Aorta (tissue), 5 donors: ENCODE measurements at regions of chrX and their contacts with region 1.

Region 1: DNA sequence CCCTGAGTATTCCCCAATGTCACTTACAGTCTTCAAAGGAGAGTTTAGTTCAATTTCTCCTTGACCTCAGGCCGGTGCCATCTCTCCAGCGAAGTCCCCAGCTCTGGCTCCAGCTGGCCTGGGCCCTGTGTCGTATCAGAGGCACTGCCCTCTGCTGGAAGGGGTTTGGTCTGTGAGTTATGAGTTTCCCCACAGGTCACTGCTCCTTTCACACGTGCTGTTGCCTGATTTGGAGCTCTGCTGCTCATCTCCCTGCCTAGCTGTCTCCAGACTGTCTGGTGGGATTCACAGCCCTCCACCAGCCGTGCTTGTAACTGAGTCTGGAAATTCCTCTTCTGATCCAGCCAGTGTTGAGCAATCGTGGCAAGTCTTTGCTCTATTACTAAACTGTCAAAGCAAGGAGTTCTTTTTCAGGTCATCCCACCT is at the start of gene RAP2C:
- DNase-seq: peak; percentile 81 to 87
- ATAC-seq: peak; percentile 85
- H3K4me3 ChIP-seq: peak within 1 kb of the TSS; percentile 56 to 85
- H3K27ac ChIP-seq: peak within 1 kb of the TSS; percentile 3 to 76
- H3K4me1 ChIP-seq: no peaks in the 10 kb centered on the region
- H3K27me3 ChIP-seq: no peaks in the 10 kb centered on the region
- total RNA-seq, gene RAP2C: 22.2 to 24.7 TPM

Region 2: GRCh38 chrX:131565909-131566308 is 653.4 kb before region 1 on chrX:
- intact Hi-C with region 1: no loop called
- DNase-seq: no peak
- ATAC-seq: no peak
- H3K4me3 ChIP-seq: no peak overlapping the region
- H3K27ac ChIP-seq: no peak overlapping the region
- H3K4me1 ChIP-seq: no peaks in the 10 kb centered on the region
- H3K27me3 ChIP-seq: no peaks in the 10 kb centered on the region

Region 3: GRCh38 chrX:131792789-131793462 is 426.4 kb before region 1 on chrX:
- intact Hi-C with region 1: no loop called
- DNase-seq: peak; percentile 90 to 91
- ATAC-seq: peak; percentile 92
- H3K4me3 ChIP-seq: peak overlapping the region in 1 of 2 donors; percentile 37
- H3K27ac ChIP-seq: no peak overlapping the region
- H3K4me1 ChIP-seq: no peaks in the 10 kb centered on the region
- H3K27me3 ChIP-seq: peaks cover 0 to 2% of the 10 kb centered on the region in 2 donors

Region 4: DNA sequence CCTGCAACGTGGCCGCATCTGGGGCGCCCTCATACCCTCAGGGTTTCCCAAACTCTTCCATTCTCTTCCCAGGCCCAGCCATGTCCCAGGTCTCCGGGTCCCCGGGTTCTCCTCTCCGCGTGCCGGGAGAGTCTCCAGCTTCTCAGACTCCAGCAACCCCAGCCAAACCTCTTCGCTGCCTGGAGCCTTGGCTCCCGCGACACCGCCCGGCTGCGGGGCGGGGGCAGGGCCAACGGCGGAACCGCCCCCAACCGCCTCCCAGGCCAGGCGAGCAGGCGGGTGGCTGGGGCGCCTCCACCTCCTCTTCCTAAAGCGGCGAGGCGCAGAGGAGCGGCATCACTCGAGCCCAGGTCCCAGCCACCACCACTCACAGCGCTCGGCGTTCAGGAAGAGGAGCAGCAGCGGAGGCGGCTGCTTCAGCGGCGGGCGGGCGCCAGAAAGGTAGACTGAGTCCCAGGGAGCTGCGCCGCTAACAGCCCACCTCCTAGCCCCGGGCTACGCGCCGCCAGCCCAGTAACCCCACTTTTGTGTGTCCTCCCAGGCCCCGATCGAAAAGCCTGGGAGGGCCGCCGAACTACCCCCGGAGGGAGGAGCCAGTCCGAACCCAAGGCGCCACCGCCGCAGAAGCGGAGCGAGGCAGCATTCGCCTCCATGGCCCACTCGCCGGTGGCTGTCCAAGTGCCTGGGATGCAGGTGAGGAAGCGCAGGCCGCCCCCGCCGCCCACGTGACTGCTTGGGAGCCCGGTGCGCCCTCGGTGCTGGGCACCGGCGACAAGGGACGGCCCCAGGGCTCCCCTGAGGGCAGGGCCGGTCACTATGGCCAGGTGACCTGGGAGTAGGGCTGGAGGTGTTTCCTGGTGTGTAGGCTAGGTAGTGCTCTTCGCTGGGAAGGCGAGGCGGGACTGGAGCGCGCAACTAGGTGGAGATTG is 196.1 kb before region 1 on chrX and contains the start of gene STK26:
- intact Hi-C with region 1: loop called in 1 of 2 experiments (anchors 5 kb)
- DNase-seq: peak; percentile 82 to 90
- ATAC-seq: peak; percentile 93
- H3K4me3 ChIP-seq: peak within 1 kb of the TSS; percentile 49 to 71
- H3K27ac ChIP-seq: peak within 1 kb of the TSS in 1 of 2 donors; percentile 30
- H3K4me1 ChIP-seq: no peaks in the 10 kb centered on the region
- H3K27me3 ChIP-seq: peaks cover 0 to 3% of the 10 kb centered on the region in 2 donors
- total RNA-seq, gene STK26: 6.5 to 10.5 TPM

Region 5: GRCh38 chrX:132092439-132093065 is 126.8 kb before region 1 on chrX:
- intact Hi-C with region 1: loop called (anchors 2 to 5 kb)
- DNase-seq: peak in 1 of 2 donors; percentile 58
- ATAC-seq: peak; percentile 74
- H3K4me3 ChIP-seq: no peak overlapping the region
- H3K27ac ChIP-seq: no peak overlapping the region
- H3K4me1 ChIP-seq: no peaks in the 10 kb centered on the region
- H3K27me3 ChIP-seq: no peaks in the 10 kb centered on the region

Region 6: GRCh38 chrX:132101799-132102198 is 117.6 kb before region 1 on chrX:
- intact Hi-C with region 1: loop called in 1 of 2 experiments (anchors 5 kb)
- DNase-seq: no peak
- ATAC-seq: peak; percentile 26
- H3K4me3 ChIP-seq: no peak overlapping the region
- H3K27ac ChIP-seq: peak overlapping the region in 1 of 2 donors; percentile 69
- H3K4me1 ChIP-seq: peaks cover 0 to 4% of the 10 kb centered on the region in 2 donors
- H3K27me3 ChIP-seq: no peaks in the 10 kb centered on the region

Region 7: DNA sequence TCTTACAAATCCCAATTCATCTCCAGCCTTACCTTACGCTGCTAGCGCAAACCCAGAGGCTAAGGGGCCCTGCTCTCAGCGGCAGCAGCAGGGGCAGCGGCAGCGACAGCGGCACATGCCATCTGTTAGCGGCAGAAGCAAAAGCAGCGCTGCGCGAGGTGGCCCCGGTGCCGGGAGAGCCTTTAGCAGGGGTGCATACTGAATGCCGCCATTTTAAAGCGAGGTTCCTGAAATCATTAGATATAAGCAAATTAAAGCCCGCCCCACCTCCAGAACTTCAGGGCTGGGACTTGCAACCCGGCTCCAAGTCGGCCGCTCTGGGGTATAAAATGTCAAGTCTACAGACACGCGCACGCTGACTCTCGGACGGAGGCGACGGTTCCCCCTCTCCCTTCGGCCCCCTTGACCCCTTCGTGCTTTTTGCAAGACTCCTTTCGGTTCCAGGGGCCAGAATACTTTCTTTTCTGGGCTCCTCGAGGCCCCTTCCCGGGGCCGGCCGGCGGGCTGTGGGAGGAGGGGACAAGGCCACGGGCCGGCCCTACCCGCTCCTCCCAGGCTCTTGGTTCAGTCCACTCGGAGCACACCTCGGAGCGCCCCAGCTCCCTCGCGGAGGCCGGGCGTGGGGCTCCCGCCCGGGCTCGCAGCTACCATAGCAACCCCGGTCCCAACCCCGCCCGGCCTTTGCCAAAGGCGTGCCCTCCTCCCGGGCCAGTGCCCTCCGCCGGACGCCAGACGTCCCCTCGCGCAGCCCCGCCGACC is 269.6 kb after region 1 on chrX and contains the start of gene MBNL3:
- intact Hi-C with region 1: loop called in 1 of 2 experiments (anchors 10 kb)
- DNase-seq: peak; percentile 70 to 84
- ATAC-seq: peak; percentile 86
- H3K4me3 ChIP-seq: peak within 1 kb of the TSS; percentile 50 to 89
- H3K27ac ChIP-seq: peak within 1 kb of the TSS in 1 of 2 donors; percentile 48
- H3K4me1 ChIP-seq: no peaks in the 10 kb centered on the region
- H3K27me3 ChIP-seq: peaks cover 0 to 3% of the 10 kb centered on the region in 2 donors
- total RNA-seq, gene MBNL3: 6.0 to 11.7 TPM